ENCODE measurements at regions of chr6 and their contacts with region 1.

Region 1: GRCh38 chr6:12228447-12229146 is 61.6 kb upstream of the EDN1 start:
- DNase-seq: no peak
- ATAC-seq: no peak
- H3K4me3 ChIP-seq: no peak overlapping the region
- H3K27ac ChIP-seq: no peak overlapping the region
- H3K4me1 ChIP-seq: peaks cover 0 to 15% (median 0%) of the 10 kb centered on the region in 9 donors
- H3K27me3 ChIP-seq: no peaks in the 10 kb centered on the region
- CTCF ChIP-seq: no peak

Region 2: DNA sequence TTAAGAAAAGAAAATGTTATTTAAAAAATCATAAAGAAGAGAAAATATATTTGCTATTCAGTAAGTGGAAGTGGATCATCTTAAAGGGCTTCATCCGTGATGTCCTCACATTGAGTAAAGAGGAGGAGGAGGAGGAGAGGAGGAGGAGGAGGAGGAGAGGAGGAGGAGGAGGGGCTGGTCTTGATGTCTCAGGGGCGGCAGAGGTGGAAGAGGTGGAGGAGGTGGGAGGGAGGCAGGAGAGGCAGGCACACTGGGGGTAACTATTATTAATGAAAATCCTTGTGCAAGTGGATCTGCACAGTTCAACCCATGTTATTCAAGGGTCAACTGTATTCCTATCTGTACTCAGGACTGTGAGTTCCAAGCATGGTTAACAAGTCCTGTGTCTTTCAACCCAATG is 14.6 kb after region 1 on chr6:
- intact Hi-C with region 1: loop called in 1 of 10 experiments (anchors 1 kb)
- DNase-seq: no peak
- ATAC-seq: no peak
- H3K4me3 ChIP-seq: no peak overlapping the region
- H3K27ac ChIP-seq: no peak overlapping the region
- H3K4me1 ChIP-seq: peaks cover 0 to 15% (median 0%) of the 10 kb centered on the region in 9 donors
- H3K27me3 ChIP-seq: peaks cover 0 to 7% (median 0%) of the 10 kb centered on the region in 7 donors
- CTCF ChIP-seq: no peak

Region 3: GRCh38 chr6:12289933-12290820 is 61.6 kb after region 1 on chr6 and contains the start of gene EDN1:
- intact Hi-C with region 1: no loop called
- DNase-seq: peak; percentile 68 to 72
- ATAC-seq: peak; percentile 79 to 94 (median 90)
- H3K4me3 ChIP-seq: peak within 1 kb of the TSS; percentile 29 to 62 (median 54)
- H3K27ac ChIP-seq: peak within 1 kb of the TSS in 9 of 10 donors; percentile 6 to 75 (median 52)
- H3K4me1 ChIP-seq: peaks cover 0 to 34% (median 15%) of the 10 kb centered on the region in 9 donors
- H3K27me3 ChIP-seq: peaks cover 0 to 38% (median 15%) of the 10 kb centered on the region in 7 donors
- CTCF ChIP-seq: peak; percentile 10 to 65 (median 55)
- total RNA-seq, gene EDN1: 0.36 to 6.3 (median 3.3) TPM

Region 4: DNA sequence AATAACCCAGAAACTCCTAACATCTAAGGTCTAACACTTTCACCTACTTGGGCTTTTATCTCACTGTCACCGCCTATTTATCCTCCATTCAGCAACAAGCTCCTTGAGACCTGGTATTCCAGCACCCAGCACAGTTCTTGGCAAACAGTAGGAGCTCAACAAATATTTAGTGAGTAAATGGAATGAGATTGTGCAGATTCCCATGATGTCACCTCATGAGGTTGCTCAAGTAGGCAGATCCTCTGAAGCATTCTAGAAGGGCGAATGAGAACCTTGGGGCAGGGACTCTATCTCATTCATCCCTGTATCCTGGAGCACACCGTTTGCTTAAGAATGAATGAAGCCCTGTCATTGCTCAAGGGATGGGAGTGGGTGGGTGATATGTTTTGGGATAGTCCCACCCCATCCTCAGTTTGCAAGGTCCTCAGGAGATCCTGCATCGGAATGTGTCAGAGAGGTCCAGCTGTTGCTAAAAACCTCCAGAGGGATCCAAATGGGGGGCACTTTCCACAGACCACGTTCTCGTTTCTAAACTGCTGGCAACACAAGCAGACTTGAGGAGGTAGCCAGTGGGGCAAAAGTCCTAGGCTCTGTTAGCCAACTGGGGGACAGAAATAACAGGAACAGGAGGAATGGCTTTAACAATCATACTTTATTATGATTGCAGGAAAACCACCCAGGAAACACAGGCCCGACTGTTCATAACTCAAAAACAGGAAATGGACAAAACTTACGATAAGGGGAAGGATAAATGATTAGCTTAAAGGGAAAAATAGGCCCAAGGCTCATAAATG is 103.6 kb after region 1 on chr6:
- intact Hi-C with region 1: no loop called
- DNase-seq: no peak
- ATAC-seq: peak in 3 of 8 donors; percentile 22 to 55 (median 49)
- H3K4me3 ChIP-seq: no peak overlapping the region
- H3K27ac ChIP-seq: peak overlapping the region in 1 of 10 donors; percentile 35
- H3K4me1 ChIP-seq: peaks cover 0 to 17% (median 12%) of the 10 kb centered on the region in 9 donors
- H3K27me3 ChIP-seq: no peaks in the 10 kb centered on the region
- CTCF ChIP-seq: no peak